Heart right ventricle (tissue), 16 donors: ENCODE measurements at regions of chr20 and their contacts with region 1.

Region 1: GRCh38 chr20:3888622-3889488 is at the start of gene PANK2:
- DNase-seq: peak; percentile 100
- ATAC-seq: peak; percentile 97 to 99 (median 98)
- H3K4me3 ChIP-seq: peak within 1 kb of the TSS; percentile 65 to 100 (median 94)
- H3K27ac ChIP-seq: peak within 1 kb of the TSS; percentile 91 to 99 (median 97)
- H3K4me1 ChIP-seq: peaks cover 6 to 49% (median 47%) of the 10 kb centered on the region in 9 donors
- H3K27me3 ChIP-seq: no peaks in the 10 kb centered on the region
- CTCF ChIP-seq: peak in 8 of 9 donors; percentile 30 to 63 (median 46)
- total RNA-seq, gene PANK2: 12.2 to 25.1 (median 17.2) TPM

Region 2: GRCh38 chr20:2742934-2743559 is 1145.8 kb before region 1 on chr20:
- intact Hi-C with region 1: no loop called
- DNase-seq: peak; percentile 39 to 43
- ATAC-seq: peak in 6 of 8 donors; percentile 32 to 68 (median 56)
- H3K4me3 ChIP-seq: no peak overlapping the region
- H3K27ac ChIP-seq: no peak overlapping the region
- H3K4me1 ChIP-seq: peaks cover 0 to 4% (median 0%) of the 10 kb centered on the region in 9 donors
- H3K27me3 ChIP-seq: peaks cover 0 to 14% (median 6%) of the 10 kb centered on the region in 7 donors
- CTCF ChIP-seq: peak; percentile 49 to 92 (median 71)

Region 3: GRCh38 chr20:3839169-3839727 is 49.6 kb before region 1 on chr20:
- intact Hi-C with region 1: no loop called
- DNase-seq: no peak
- ATAC-seq: peak in 2 of 8 donors; percentile 50 to 60
- H3K4me3 ChIP-seq: no peak overlapping the region
- H3K27ac ChIP-seq: peak overlapping the region in 1 of 10 donors; percentile 69
- H3K4me1 ChIP-seq: peaks cover 0 to 24% (median 9%) of the 10 kb centered on the region in 9 donors
- H3K27me3 ChIP-seq: no peaks in the 10 kb centered on the region
- CTCF ChIP-seq: no peak

Region 4: DNA sequence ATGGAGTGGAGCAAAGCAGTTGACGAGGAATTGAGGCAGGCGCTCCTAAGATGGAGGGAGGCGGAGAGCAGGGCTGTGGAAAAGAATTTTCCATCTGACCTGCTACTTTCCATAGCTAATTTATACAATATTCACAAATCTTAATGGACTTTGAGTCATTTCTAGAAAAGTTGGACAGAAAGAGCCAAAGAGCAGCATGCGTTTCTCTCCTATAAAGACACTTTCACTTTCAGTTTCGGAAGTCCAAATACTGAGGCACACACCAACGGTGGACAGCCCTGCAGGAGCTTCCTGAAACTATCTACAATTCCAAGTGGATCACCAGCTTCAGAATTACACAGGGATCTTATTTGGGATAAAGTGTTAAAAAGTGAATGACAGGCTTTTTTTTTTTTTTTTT is 43.8 kb after region 1 on chr20:
- intact Hi-C with region 1: loop called in 4 of 10 experiments (anchors 1 to 5 kb)
- DNase-seq: no peak
- ATAC-seq: peak in 3 of 8 donors; percentile 22 to 45 (median 42)
- H3K4me3 ChIP-seq: peak overlapping the region in 9 of 10 donors; percentile 20 to 55 (median 44)
- H3K27ac ChIP-seq: peak overlapping the region; percentile 13 to 82 (median 66)
- H3K4me1 ChIP-seq: peaks cover 5 to 77% (median 57%) of the 10 kb centered on the region in 9 donors
- H3K27me3 ChIP-seq: no peaks in the 10 kb centered on the region
- CTCF ChIP-seq: no peak

Region 5: DNA sequence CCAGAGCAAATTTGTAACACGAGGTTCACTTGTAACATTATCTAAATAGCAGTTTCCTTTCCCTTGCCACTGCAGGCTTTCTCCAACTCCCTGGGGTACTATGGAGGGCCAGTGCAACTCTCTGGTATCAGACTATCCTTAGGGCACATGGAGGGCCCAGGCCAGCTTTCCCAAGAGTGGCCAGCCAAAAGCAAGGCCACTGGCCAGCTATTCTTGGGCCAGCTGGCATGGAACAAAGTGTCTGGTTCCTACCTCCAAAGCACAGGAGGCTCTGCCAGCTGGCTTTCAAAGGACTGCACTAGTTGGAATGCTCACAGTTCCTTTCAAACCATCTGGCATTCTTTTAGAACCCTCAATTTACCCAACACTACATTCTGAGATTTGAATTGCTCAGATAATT is 117.8 kb after region 1 on chr20:
- intact Hi-C with region 1: loop called in 4 of 10 experiments (anchors 5 kb)
- DNase-seq: peak; percentile 62 to 63
- ATAC-seq: peak; percentile 76 to 97 (median 91)
- H3K4me3 ChIP-seq: no peak overlapping the region
- H3K27ac ChIP-seq: peak overlapping the region in 7 of 10 donors; percentile 2 to 59 (median 32)
- H3K4me1 ChIP-seq: peaks cover 7 to 50% (median 21%) of the 10 kb centered on the region in 9 donors
- H3K27me3 ChIP-seq: no peaks in the 10 kb centered on the region
- CTCF ChIP-seq: no peak

Region 6: GRCh38 chr20:4064144-4064909 is 175.5 kb after region 1 on chr20:
- intact Hi-C with region 1: loop called in 2 of 10 experiments (anchors 5 to 10 kb)
- DNase-seq: peak; percentile 94
- ATAC-seq: peak; percentile 90 to 96 (median 93)
- H3K4me3 ChIP-seq: peak overlapping the region in 1 of 10 donors; percentile 12
- H3K27ac ChIP-seq: peak overlapping the region; percentile 64 to 91 (median 83)
- H3K4me1 ChIP-seq: peaks cover 13 to 95% (median 58%) of the 10 kb centered on the region in 9 donors
- H3K27me3 ChIP-seq: no peaks in the 10 kb centered on the region
- CTCF ChIP-seq: peak in 3 of 9 donors; percentile 18 to 38 (median 19)

Region 7: GRCh38 chr20:4082406-4083097 is 193.7 kb after region 1 on chr20:
- intact Hi-C with region 1: loop called in 4 of 10 experiments (anchors 5 to 10 kb)
- DNase-seq: peak; percentile 44 to 55
- ATAC-seq: peak; percentile 33 to 71 (median 46)
- H3K4me3 ChIP-seq: no peak overlapping the region
- H3K27ac ChIP-seq: peak overlapping the region in 5 of 10 donors; percentile 19 to 88 (median 53)
- H3K4me1 ChIP-seq: peaks cover 0 to 53% (median 8%) of the 10 kb centered on the region in 9 donors
- H3K27me3 ChIP-seq: peaks cover 0 to 6% (median 0%) of the 10 kb centered on the region in 7 donors
- CTCF ChIP-seq: no peak